CD4-positive, alpha-beta T cell (primary cell): ENCODE measurements at regions of chr21 and their contacts with region 1.

Region 1: DNA sequence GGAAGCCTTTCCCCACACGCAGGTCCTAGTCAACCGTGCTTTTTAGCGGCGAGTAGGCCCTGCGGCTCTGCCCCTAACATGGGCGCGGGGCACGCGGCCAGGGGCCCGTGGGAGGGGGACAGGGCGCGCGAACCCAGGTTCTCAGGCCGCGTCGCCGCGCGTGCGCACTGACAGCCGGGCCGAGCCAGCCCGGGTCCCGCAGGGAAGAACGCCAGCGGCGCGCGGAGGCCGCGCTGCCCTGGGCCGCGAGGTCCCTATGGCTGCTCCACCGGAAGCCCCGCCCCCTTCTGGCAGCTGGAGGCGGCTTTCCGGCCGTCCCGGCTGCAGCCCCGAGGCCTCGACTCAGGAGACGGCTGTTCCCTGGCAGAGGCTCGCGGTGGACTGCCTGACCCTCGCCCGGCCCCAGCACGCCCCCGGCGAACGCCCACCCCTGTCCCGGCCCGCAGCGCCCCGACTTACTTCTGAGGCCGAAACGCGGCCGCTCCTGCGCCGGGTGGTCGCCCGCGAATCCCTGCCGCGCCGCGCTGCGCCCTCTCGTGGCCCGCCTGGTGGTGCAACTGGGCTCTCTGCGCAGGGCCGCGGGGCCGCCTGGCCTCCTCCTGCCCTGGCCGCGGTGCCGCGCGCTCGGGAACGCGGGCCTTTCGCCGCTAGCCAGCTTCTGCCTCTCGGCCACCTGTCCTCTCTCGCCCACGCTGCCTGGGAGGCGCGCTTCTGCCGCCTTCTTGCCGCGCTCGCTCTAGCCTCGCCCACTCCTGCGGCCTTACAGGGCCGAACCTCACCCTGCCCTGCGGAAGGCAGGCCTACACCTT is 16.6 kb upstream of the RIPPLY3 start:
- DNase-seq: peak; percentile 51 to 93 (median 78)
- ATAC-seq: peak; percentile 62
- H3K4me3 ChIP-seq: peak overlapping the region; percentile 60
- H3K4me3 Mint-ChIP-seq: peak overlapping the region; percentile 89
- H3K27ac ChIP-seq: peak overlapping the region; percentile 62 to 64
- H3K27ac Mint-ChIP-seq: peak overlapping the region; percentile 59
- H3K4me1 ChIP-seq: peaks cover 21% of the 10 kb centered on the region
- H3K4me1 Mint-ChIP-seq: peaks cover 25% of the 10 kb centered on the region
- H3K27me3 ChIP-seq: no peaks in the 10 kb centered on the region
- H3K27me3 Mint-ChIP-seq: no peaks in the 10 kb centered on the region
- CTCF ChIP-seq: peak; percentile 92

Region 2: DNA sequence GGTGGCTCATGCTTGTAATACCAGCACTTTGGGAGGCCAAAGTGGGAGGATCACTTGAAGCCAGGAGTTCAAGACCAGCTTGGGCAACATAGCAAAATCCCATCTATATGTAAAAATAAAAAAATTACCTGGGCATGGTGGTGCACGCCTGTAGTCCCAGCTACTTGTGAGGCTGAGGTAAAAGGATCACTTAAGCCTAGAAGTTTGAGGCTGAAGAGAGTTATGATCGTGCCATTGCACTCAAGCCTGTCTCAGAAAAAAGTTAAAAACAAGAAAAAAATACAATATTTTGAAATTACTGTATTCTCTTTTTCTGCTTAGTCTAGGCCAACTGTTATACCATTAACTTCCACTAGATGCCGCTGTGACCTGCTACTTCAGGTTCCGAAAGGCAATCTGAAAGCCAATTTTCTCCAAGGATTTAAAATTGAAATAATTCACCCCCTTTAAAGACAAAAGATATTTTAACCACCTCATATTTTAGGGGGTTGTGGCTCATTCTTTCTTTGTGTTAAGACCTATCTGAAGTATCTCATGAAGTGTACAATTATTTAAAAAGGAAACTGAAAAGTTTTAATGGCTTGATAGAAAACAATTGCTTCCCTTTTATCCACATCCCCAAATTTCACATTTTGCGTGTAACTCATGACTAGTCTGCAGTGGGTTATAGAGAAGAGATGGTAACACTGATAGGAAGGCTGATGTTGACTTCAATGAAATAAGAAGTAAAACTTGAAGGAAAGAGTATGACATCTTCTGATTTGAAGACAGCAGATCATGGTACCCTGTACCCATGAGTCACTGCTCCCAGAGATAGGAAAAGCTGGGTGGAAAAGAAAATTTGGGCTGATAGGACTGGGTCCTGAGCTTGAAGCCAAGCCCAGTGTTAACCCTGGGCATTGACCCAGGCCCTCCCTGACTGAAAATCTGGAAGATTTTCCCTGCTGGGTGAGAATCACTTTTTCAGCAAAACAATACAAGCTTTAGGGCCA is 485.5 kb before region 1 on chr21:
- CTCF ChIA-PET with region 1: no interaction called
- POLR2A ChIA-PET with region 1: no interaction called
- intact Hi-C with region 1: loop called in 1 of 2 experiments (anchors 1 kb)
- DNase-seq: peak in 10 of 14 experiments; percentile 5 to 74 (median 24)
- ATAC-seq: no peak
- H3K4me3 ChIP-seq: no peak overlapping the region
- H3K4me3 Mint-ChIP-seq: no peak overlapping the region
- H3K27ac ChIP-seq: no peak overlapping the region
- H3K27ac Mint-ChIP-seq: no peak overlapping the region
- H3K4me1 ChIP-seq: no peaks in the 10 kb centered on the region
- H3K4me1 Mint-ChIP-seq: no peaks in the 10 kb centered on the region
- H3K27me3 ChIP-seq: no peaks in the 10 kb centered on the region
- H3K27me3 Mint-ChIP-seq: peaks cover 4% of the 10 kb centered on the region
- CTCF ChIP-seq: peak; percentile 99

Region 3: GRCh38 chr21:36934864-36935420 is 55.0 kb before region 1 on chr21:
- CTCF ChIA-PET with region 1: no interaction called
- POLR2A ChIA-PET with region 1: no interaction called
- intact Hi-C with region 1: loop called in 1 of 2 experiments (anchors 5 kb)
- DNase-seq: no peak
- ATAC-seq: no peak
- H3K4me3 ChIP-seq: no peak overlapping the region
- H3K4me3 Mint-ChIP-seq: no peak overlapping the region
- H3K27ac ChIP-seq: no peak overlapping the region
- H3K27ac Mint-ChIP-seq: no peak overlapping the region
- H3K4me1 ChIP-seq: no peaks in the 10 kb centered on the region
- H3K4me1 Mint-ChIP-seq: no peaks in the 10 kb centered on the region
- H3K27me3 ChIP-seq: no peaks in the 10 kb centered on the region
- H3K27me3 Mint-ChIP-seq: no peaks in the 10 kb centered on the region
- CTCF ChIP-seq: no peak

Region 4: DNA sequence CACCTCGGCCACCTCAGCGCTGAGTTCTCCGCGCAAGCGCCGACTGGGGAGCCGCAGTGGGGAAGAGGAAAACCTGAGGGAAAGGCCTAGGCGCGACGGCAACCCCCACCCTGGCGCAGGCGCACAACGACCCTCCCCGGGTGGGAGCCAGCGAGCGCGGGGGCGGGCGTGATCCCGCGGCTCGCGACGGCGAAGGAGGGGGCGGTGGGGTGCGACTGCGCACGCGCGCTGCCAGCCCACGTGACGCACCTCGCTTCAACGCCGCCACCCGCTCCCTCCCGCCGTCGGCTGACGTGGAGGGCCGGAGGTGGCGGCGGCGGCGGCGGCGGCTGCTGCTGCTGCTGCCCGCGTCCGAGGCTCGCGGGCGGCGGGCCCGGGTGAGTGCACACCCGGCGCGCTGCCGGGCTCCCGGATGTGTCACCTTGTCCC is 83.1 kb after region 1 on chr21 and contains the starts of genes PIGP and TTC3:
- CTCF ChIA-PET with region 1: interaction called, 8 read pairs
- POLR2A ChIA-PET with region 1: no interaction called
- intact Hi-C with region 1: loop called (anchors 5 kb)
- DNase-seq: peak; percentile 92 to 99 (median 95)
- ATAC-seq: peak; percentile 64
- H3K4me3 ChIP-seq: peak within 1 kb of the TSS; percentile 88
- H3K4me3 Mint-ChIP-seq: peak within 1 kb of the TSS; percentile 98
- H3K27ac ChIP-seq: peak within 1 kb of the TSS; percentile 93
- H3K27ac Mint-ChIP-seq: peak within 1 kb of the TSS; percentile 94
- H3K4me1 ChIP-seq: peaks cover 22% of the 10 kb centered on the region
- H3K4me1 Mint-ChIP-seq: peaks cover 60% of the 10 kb centered on the region
- H3K27me3 ChIP-seq: no peaks in the 10 kb centered on the region
- H3K27me3 Mint-ChIP-seq: no peaks in the 10 kb centered on the region
- CTCF ChIP-seq: no peak
- total RNA-seq, gene PIGP: 11.1 to 14.8 TPM
- total RNA-seq, gene TTC3: 141 to 142 TPM